ENCODE measurements at regions of chr15 and their contacts with region 1.

Region 1: DNA sequence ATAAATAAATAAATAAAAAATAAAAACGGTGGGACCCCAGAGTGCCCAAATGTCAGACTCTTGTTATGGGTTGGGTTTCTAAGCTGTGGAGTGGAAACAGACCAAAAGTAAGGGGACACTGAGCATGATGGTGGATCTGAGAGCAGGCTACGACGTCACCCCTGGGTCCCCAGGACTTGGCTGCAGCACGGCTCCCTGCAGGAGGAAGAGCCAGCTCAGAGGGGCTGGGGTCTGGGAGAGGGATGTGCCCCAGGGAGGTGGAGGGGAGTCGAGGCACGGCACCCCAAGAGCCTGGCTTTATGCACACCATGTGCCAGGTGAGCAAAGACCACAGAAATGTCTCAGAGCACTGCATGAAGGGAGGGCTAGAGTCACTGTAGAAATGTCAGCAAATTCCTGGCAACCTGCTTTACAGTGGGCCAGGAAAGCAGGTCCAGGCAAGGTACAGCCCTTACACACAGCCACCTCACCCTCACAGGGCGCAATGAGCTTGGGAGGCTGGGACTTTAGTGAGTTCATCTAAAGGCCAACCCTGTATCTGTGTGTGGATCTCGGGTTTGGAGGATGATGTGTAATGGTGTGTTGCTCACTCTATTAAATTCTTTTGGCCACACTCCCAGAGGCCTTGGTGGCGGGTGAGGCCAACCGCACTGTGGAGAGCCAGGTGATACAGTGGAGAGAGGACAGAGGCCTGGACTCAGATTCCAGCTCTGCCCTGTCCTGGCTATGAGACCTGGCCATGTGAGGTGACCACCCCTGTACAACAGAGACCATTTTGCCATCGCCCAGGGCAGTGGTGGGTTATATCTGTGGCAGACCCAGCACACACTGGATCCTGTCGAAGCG is 14.1 kb downstream of the CTSH start:
- DNase-seq: peak; percentile 100
- H3K4me3 ChIP-seq: no peak overlapping the region
- H3K27ac ChIP-seq: peak overlapping the region; percentile 62
- H3K4me1 ChIP-seq: peaks cover 16% of the 10 kb centered on the region
- H3K27me3 ChIP-seq: no peaks in the 10 kb centered on the region
- CTCF ChIP-seq: no peak

Region 2: GRCh38 chr15:78637776-78638435 is 292.9 kb before region 1 on chr15:
- CTCF ChIA-PET with region 1: no interaction called
- dilution Hi-C with region 1: no loop called
- in situ Hi-C with region 1: no loop called
- intact Hi-C with region 1: no loop called
- DNase-seq: no peak
- H3K4me3 ChIP-seq: no peak overlapping the region
- H3K27ac ChIP-seq: no peak overlapping the region
- H3K4me1 ChIP-seq: peaks cover 10% of the 10 kb centered on the region
- H3K27me3 ChIP-seq: no peaks in the 10 kb centered on the region
- CTCF ChIP-seq: no peak

Region 3: DNA sequence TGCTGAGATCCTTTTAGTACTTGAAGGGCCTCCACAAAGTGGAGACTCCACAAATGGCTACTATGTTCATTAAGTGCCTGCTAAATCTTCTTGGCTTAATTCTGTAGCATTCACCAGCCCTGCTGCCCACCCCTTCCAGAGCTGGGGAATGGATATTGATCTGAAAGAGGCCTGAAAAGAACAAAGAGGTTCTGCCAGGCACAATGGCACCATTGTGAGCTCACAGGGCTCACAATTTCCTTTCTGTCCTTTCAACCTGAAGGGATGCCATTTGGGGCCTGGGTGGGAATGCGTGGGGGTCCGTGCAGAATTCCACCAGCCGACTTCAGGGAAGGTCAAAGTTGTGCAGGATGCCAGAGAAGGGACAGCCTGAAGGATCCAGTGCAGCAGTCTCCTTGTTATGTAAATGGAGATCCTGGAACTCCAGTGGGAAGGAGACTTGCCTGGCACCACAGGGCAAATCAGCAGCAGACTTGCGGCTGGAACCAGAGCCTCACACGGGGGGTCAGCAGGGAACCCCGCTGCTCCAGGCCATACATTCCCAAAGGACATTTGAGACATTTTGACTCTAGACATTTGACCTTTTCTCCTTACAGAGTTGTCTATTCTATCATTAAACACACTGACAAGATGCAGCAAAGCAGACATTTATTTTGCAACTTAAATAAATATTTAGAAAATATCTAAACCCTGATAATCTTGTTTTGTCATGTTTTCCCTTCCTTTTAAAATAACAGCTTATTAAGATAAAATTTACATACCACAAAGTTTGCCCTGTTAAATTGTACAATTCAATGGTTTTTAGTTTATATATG is 79.6 kb before region 1 on chr15:
- CTCF ChIA-PET with region 1: no interaction called
- dilution Hi-C with region 1: no loop called
- in situ Hi-C with region 1: no loop called
- intact Hi-C with region 1: no loop called
- DNase-seq: no peak
- H3K4me3 ChIP-seq: no peak overlapping the region
- H3K27ac ChIP-seq: no peak overlapping the region
- H3K4me1 ChIP-seq: no peaks in the 10 kb centered on the region
- H3K27me3 ChIP-seq: no peaks in the 10 kb centered on the region
- CTCF ChIP-seq: no peak

Region 4: GRCh38 chr15:78893538-78893937 is 37.2 kb before region 1 on chr15:
- CTCF ChIA-PET with region 1: no interaction called
- dilution Hi-C with region 1: no loop called
- in situ Hi-C with region 1: no loop called
- intact Hi-C with region 1: no loop called
- DNase-seq: no peak
- H3K4me3 ChIP-seq: no peak overlapping the region
- H3K27ac ChIP-seq: no peak overlapping the region
- H3K4me1 ChIP-seq: no peaks in the 10 kb centered on the region
- H3K27me3 ChIP-seq: no peaks in the 10 kb centered on the region
- CTCF ChIP-seq: no peak

Region 5: GRCh38 chr15:78944669-78945407 is 14.1 kb after region 1 on chr15 and contains the start of gene CTSH:
- CTCF ChIA-PET with region 1: no interaction called
- dilution Hi-C with region 1: no loop called
- in situ Hi-C with region 1: no loop called
- intact Hi-C with region 1: loop called (anchors 2 kb)
- DNase-seq: peak; percentile 58
- H3K4me3 ChIP-seq: peak within 1 kb of the TSS; percentile 50 to 68 (median 59)
- H3K27ac ChIP-seq: no peak within 1 kb of the TSS
- H3K4me1 ChIP-seq: peaks cover 12% of the 10 kb centered on the region
- H3K27me3 ChIP-seq: no peaks in the 10 kb centered on the region
- CTCF ChIP-seq: no peak
- total RNA-seq, gene CTSH: 22.6 to 74.2 TPM

Region 6: GRCh38 chr15:78971387-78971786 is 40.6 kb after region 1 on chr15:
- CTCF ChIA-PET with region 1: no interaction called
- dilution Hi-C with region 1: loop called (anchors 5 kb)
- in situ Hi-C with region 1: no loop called
- intact Hi-C with region 1: no loop called
- DNase-seq: no peak
- H3K4me3 ChIP-seq: no peak overlapping the region
- H3K27ac ChIP-seq: no peak overlapping the region
- H3K4me1 ChIP-seq: peaks cover 8% of the 10 kb centered on the region
- H3K27me3 ChIP-seq: no peaks in the 10 kb centered on the region
- CTCF ChIP-seq: no peak

Region 7: DNA sequence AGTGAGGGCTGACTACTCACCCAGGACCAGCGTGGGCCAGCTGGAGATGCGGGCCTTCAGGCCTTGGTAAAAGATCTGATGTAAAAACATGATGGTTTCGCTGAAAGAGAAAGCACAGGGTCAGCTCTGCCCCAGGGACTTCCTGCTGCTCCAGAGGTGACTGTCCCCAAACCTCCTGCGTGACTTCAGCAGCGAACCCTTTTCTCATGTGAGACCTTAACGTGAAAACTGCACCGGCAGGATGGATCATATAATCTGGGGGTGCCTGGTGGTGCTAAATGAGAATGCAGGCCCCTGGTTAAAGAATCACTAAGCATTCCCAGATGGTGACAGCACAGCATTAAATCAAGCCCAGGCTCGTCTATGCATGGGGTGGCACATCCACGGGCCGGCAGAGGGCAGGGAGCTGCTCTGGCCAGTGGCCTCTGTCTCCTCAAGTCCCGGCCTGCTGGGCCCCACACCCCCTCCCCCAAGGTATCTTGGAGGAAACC is 104.4 kb after region 1 on chr15:
- CTCF ChIA-PET with region 1: no interaction called
- dilution Hi-C with region 1: loop called (anchors 5 kb)
- in situ Hi-C with region 1: no loop called
- intact Hi-C with region 1: no loop called
- DNase-seq: peak; percentile 63
- H3K4me3 ChIP-seq: no peak overlapping the region
- H3K27ac ChIP-seq: no peak overlapping the region
- H3K4me1 ChIP-seq: peaks cover 20% of the 10 kb centered on the region
- H3K27me3 ChIP-seq: no peaks in the 10 kb centered on the region
- CTCF ChIP-seq: peak; percentile 53 to 68

Region 8: GRCh38 chr15:79168922-79169456 is 238.2 kb after region 1 on chr15:
- CTCF ChIA-PET with region 1: interaction called, 16 read pairs
- dilution Hi-C with region 1: no loop called
- in situ Hi-C with region 1: no loop called
- intact Hi-C with region 1: no loop called
- DNase-seq: peak; percentile 36
- H3K4me3 ChIP-seq: no peak overlapping the region
- H3K27ac ChIP-seq: no peak overlapping the region
- H3K4me1 ChIP-seq: peaks cover 14% of the 10 kb centered on the region
- H3K27me3 ChIP-seq: no peaks in the 10 kb centered on the region
- CTCF ChIP-seq: peak in 1 of 2 donors; percentile 36

Measured in mammary epithelial cell (primary cell).